KBM-7 (cell line): ENCODE measurements at regions of chr7 and their contacts with region 1.

Region 1: DNA sequence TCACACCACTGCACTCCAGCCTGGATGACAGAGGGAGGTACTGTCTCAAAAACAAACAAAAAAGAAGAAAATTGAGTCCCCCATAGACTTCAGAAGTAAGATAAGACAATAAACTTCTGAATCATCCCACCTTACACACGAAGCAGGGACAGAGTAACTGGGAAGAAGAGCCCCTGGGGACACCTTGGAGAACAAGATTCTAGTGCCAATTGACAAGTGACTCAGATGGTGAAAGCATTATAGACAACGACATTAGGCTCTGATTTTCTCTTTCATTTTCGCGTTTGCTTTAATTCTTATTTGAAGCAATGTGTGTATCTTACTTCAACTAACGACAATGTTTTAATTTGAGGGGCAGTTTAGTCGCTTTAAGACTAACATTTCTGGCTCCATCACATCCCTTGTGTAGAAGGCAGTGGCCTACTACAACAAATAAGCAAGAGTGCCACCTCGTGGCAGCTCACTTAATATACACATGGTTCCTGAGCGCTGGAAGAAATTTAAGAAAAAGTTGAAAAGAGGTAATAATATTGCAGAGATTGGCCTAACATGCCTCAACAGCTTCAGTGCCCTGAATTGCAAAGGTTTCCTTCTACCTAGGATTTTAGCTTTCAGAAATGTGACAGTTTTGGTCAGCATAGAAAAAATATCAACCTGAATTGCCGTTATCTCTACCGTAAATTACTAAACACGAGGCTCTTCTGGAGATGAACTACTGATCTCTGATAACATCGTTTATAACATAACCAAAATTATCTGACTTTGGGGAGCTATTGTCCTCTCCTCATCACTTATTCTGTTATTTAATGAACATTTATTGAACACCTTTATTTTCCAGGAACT is 36.7 kb downstream of the ASNS start:
- DNase-seq: peak; percentile 70

Region 2: DNA sequence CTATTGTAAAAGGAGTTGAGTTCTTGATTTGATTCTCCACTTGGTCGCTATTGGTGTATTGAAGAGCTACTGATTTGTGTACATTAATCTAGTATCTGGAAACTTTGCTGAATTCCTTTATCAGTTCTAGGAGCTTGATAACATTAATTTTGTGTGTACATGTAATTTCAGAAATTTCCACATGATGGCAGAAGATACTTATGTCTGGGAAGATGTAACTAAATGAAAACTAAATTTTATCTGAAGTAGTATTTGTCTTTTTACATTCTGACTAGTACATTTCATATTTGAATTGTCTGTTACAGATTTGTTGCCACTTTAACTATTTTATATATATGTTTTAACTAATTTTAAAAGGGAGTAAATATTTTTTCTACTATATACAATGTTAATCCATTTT is 690.4 kb before region 1 on chr7:
- in situ Hi-C with region 1: loop called (anchors 25 kb)
- DNase-seq: peak; percentile 51

Region 3: DNA sequence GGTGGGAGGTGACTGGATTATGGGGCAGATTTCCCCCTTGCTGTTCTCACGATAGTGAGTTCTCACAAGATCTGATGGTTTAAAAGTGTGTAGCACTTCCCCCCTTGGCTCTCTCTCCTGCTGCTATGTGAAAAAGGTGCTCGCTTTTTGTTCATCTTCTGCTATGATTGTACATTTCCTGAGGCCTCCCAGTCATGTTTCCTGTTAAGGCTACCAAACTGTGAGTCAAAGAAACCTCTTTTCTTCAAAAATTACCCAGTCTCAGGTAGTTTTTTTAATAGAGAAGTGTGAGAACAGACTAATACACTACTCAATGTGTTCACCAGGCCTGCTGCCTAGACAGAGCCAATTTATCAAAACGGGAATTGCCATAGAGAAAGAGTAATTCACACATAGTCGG is 668.3 kb before region 1 on chr7:
- in situ Hi-C with region 1: no loop called
- DNase-seq: peak; percentile 9